ENCODE measurements at regions of chr9 and their contacts with region 1.

Region 1: DNA sequence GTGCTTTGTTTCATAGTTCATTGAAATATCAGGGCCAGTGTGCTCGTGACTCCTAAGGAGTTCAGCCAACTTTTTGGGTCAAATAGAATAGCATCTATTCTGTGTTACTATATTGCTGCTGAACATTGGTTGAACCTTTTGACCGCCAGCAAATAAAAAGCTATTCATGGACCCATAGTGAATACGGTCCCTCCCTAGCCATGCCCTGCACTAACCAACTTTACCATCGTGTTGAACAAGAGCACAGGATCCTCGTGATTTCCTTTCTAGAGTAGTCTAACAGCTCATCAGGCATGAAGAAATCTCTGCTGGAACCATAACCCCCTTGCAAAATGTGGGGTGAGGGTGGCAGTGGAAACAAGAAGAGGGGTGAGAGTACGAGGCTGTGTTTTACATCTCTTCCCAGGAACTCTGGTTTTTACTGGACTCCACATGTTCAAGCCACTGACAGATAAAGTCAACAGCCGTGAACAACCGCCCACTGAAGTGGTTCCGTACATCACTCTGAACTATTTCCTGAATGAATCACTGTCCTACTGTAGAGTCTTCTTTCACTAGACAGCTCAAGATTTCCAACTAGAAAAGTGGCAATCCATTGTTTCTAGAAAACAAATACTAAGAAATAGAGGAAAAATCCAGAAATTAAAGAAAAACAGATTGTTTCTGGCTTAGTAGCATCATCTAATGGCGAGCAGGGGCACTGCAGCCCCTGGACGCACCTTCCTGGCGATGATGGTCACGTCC is 70.1 kb upstream of the SPATA31E1 start:
- DNase-seq: peak; percentile 49
- ATAC-seq: peak; percentile 48; the same call in 1 of the 2 replicates
- H3K4me3 ChIP-seq: no peak overlapping the region
- H3K27ac ChIP-seq: no peak overlapping the region
- H3K4me1 ChIP-seq: peaks cover 5% of the 10 kb centered on the region; the same call in 1 of the 2 replicates
- H3K27me3 ChIP-seq: no peaks in the 10 kb centered on the region
- CTCF ChIP-seq: peak; percentile 93

Region 2: GRCh38 chr9:87678650-87679515 is 133.7 kb before region 1 on chr9:
- CTCF ChIA-PET with region 1: no interaction called
- POLR2A ChIA-PET with region 1: no interaction called
- intact Hi-C with region 1: loop called (anchors 1 kb)
- DNase-seq: peak; percentile 78
- ATAC-seq: peak; percentile 56
- H3K4me3 ChIP-seq: no peak overlapping the region
- H3K27ac ChIP-seq: no peak overlapping the region
- H3K4me1 ChIP-seq: no peaks in the 10 kb centered on the region
- H3K27me3 ChIP-seq: 0 out of 2 replicates have a peak, but pooled peaks cover 4% of the 10 kb centered on the region
- CTCF ChIP-seq: peak; percentile 78

Region 3: DNA sequence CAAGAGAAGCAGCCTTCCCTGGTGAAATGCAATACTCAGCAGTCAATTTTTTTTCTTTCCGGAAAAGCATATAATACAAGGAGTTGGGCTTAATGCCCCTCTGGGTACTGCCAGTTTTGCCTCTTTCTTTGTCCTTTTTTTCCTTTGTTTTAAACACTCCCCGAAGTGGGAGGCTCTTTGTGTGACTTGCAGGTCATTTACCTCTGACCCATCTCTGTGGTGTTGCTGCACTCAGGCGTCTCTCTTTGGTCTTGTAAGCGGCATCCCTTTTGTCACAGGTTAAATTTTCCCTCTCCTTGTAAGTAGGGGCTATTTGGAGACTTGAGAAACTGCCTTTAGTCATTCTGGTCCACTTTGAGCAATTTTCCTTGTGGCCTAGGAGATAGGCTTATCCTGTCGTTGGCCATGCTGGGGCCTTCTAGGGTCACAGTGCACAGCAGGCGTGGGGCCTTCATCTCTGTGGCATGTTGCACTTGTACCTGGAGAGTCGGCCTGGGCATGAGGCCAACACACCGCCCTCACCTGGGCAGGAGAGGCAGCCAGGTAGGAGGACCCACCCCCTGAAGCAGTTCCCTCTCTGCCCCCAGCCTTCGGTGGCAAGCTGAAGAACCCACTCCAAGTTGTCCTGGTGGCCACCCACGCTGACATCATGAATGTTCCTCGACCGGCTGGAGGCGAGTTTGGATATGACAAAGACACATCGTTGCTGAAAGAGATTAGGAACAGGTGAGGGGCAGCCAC is 114.3 kb before region 1 on chr9:
- CTCF ChIA-PET with region 1: no interaction called
- POLR2A ChIA-PET with region 1: no interaction called
- intact Hi-C with region 1: no loop called
- DNase-seq: no peak
- ATAC-seq: no peak
- H3K4me3 ChIP-seq: no peak overlapping the region
- H3K27ac ChIP-seq: no peak overlapping the region
- H3K4me1 ChIP-seq: peaks cover 9% of the 10 kb centered on the region; the same call in 1 of the 2 replicates
- H3K27me3 ChIP-seq: no peaks in the 10 kb centered on the region
- CTCF ChIP-seq: no peak